ENCODE measurements at regions of chr6 and their contacts with region 1.

Region 1: DNA sequence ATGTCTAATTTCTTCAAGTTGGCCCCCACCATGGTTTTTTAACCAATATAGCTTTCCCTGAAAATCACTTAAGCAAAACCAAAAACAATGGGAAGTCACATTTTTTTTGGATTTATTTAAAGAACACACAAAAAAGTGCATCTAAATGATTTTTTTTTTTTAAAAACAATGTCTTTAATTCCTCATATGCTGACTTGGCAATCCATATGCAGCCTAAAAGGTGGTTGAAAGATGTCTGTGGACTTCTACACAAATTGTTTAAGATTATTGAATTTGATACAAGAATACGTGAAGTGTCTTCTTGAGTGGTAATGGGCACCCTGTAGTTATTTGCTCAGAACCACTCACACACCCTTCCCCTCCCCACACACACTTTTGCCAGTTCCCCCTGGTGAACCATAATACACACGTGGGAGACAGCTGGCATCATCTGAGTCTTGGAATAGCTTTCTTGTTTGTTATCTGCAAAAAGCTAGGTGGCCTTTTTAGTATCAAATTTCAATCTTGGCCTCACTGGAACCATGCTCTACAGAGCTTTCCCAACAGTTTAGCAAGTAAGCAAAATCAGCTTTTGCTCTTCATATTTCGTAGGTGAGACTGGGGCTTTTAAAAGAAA is 60.9 kb upstream of the TULP1 start:
- DNase-seq: no peak
- H3K4me3 ChIP-seq: no peak overlapping the region
- H3K27ac ChIP-seq: no peak overlapping the region
- H3K4me1 ChIP-seq: no peaks in the 10 kb centered on the region
- H3K27me3 ChIP-seq: no peaks in the 10 kb centered on the region
- CTCF ChIP-seq: no peak
- POLR2A ChIP-seq: no peak

Region 2: DNA sequence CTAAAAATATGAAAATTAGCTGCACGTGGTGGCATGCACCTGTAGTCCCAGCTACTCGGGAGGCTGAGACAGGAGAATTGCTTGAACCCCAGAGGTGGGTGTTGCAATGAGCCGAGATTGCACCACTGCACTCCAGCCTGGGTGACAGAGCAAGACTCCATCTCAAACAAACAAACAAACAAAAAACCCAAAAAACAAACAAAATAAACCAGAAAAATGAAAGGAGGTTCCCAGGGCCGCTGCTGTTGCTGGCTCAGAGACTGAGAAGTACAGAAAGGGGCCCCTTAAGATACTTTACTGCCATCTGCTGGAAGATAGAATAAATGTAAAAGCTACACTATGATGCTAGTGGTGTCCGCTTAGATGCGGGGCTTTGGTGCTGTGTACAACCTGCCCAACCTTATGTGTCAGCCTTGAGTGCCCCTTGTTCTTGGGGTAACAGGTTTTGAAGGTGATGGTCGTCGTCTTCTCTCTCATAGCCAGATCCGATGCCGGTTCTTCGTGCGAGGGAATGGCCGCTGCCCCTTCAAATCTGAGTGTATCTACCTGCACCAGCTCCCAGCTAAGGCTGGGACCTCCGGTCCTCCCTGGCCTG is 124.2 kb before region 1 on chr6:
- intact Hi-C with region 1: no loop called
- DNase-seq: no peak
- H3K4me3 ChIP-seq: no peak overlapping the region
- H3K27ac ChIP-seq: no peak overlapping the region
- H3K4me1 ChIP-seq: peaks cover 17 to 39% (median 17%) of the 10 kb centered on the region in 3 donors
- H3K27me3 ChIP-seq: no peaks in the 10 kb centered on the region
- CTCF ChIP-seq: peak; percentile 64 to 81 (median 72)
- POLR2A ChIP-seq: no peak

Region 3: DNA sequence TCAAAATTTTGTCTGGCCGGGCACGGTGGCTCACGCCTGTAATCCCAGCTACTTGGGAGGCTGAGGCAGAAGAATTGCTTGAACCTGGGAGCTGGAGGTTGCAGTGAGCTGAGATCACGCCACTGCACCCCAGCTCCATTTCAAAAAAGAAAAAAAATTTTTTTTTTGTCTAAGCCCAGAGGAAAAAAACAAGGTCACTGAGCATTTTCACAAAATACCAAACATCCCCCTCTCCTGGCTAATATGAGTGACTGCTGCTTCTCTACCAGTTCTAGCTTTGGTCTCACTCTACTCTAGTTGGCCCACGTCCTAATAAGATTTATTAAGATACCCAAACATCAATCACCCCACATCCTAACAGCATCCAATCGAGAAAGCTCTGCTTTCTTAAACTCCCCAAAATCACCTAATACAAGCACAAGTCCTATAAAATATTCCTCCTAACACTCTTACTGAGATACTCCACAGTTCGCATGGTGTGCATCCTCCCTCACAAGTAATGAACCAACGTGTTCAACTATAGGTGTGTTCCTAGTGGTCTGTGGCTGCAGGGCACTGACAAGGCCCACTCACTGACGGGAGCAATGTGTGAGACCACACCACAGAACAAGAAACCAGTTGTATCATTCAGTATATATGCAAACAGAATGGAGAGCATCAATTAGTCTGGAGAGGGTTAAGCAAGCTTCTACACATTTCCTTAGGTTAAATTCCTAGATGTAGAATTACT is 50.9 kb after region 1 on chr6:
- intact Hi-C with region 1: loop called (anchors 10 kb)
- DNase-seq: no peak
- H3K4me3 ChIP-seq: no peak overlapping the region
- H3K27ac ChIP-seq: peak overlapping the region in 1 of 4 donors; percentile 0
- H3K4me1 ChIP-seq: peaks cover 0 to 11% (median 0%) of the 10 kb centered on the region in 3 donors
- H3K27me3 ChIP-seq: no peaks in the 10 kb centered on the region
- CTCF ChIP-seq: peak in 2 of 6 experiments; percentile 9 to 36
- POLR2A ChIP-seq: no peak

Measured in esophagus squamous epithelium (tissue), 5 donors.